Lower leg skin (tissue), 4 donors: ENCODE measurements at regions of chr7 and their contacts with region 1.

Region 1: GRCh38 chr7:69457595-69458504 is 140.4 kb upstream of the AUTS2 start:
- DNase-seq: peak in 1 of 2 donors; percentile 88
- H3K4me3 ChIP-seq: no peak overlapping the region
- CTCF ChIP-seq: no peak
- POLR2A ChIP-seq: no peak

Region 2: DNA sequence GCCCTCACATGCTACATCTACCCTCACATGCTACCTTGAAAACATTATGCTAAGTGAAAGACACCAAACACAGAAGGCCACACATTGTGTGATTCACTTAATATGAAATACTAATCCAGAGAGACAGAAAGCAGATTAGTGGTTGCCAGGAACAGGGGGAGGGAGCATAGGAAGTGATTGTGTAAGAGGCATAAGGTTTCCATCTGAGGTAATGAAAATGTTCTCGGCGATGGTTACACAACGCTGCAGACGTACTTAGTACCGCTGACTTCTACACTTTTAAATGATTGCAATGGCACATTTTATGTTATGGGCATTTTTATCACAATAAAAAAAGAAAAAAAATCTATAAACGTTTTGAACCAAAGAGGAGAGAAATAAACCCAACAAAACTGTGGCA is 1718.9 kb before region 1 on chr7:
- intact Hi-C with region 1: no loop called
- DNase-seq: peak in 1 of 2 donors; percentile 69
- H3K4me3 ChIP-seq: no peak overlapping the region
- CTCF ChIP-seq: no peak
- POLR2A ChIP-seq: no peak

Region 3: DNA sequence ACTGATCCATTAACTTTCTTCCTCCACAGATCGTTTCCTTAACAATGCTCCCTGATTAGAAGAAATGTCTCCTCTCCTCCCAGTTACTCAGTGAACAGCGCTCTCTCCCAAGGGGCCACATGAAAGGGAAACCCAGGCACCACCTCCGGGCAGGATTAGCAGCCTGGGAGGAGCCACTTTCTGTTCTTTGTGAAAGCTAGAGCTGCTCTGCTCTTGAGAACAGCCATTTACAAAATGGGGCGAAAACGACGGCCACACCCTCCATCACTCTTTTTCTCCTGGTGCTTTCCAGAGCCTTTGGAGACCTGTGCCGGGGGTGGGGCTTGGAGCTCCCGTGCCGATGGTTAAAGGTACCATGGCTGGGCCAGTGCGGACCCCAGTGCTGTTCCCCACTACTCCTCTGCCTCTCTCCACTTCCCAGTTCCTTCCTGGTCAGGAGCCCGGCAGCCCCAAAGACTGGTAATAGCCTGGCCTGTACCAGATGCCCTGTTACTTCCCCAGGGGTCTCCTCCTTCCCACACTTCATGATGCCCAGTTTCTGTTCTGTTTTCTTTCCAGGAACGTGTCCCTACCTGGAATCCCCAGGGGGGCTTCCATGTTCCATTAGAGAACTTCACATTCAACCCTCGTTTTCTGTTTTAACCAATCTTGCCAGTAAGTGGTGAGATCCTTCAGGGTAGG is 1271.2 kb after region 1 on chr7:
- intact Hi-C with region 1: loop called (anchors 10 kb)
- DNase-seq: no peak
- H3K4me3 ChIP-seq: no peak overlapping the region
- CTCF ChIP-seq: no peak
- POLR2A ChIP-seq: no peak